Naive thymus-derived CD4-positive, alpha-beta T cell (primary cell): ENCODE measurements at regions of chr1 and their contacts with region 1.

Region 1: GRCh38 chr1:28581536-28582247 is 10.4 kb upstream of the RAB42 start:
- DNase-seq: peak; percentile 85 to 96 (median 91)
- ATAC-seq: peak; percentile 95
- H3K4me3 ChIP-seq: peak overlapping the region; percentile 93
- H3K4me3 Mint-ChIP-seq: peak overlapping the region; percentile 94 to 99 (median 97)
- H3K27ac ChIP-seq: peak overlapping the region; percentile 84
- H3K27ac Mint-ChIP-seq: peak overlapping the region; percentile 86 to 96 (median 93)
- H3K4me1 ChIP-seq: peaks cover 20 to 23% of the 10 kb centered on the region in 2 donors
- H3K4me1 Mint-ChIP-seq: peaks cover 22 to 48% (median 37%) of the 10 kb centered on the region in 7 donors
- H3K27me3 ChIP-seq: no peaks in the 10 kb centered on the region
- H3K27me3 Mint-ChIP-seq: no peaks in the 10 kb centered on the region

Region 2: DNA sequence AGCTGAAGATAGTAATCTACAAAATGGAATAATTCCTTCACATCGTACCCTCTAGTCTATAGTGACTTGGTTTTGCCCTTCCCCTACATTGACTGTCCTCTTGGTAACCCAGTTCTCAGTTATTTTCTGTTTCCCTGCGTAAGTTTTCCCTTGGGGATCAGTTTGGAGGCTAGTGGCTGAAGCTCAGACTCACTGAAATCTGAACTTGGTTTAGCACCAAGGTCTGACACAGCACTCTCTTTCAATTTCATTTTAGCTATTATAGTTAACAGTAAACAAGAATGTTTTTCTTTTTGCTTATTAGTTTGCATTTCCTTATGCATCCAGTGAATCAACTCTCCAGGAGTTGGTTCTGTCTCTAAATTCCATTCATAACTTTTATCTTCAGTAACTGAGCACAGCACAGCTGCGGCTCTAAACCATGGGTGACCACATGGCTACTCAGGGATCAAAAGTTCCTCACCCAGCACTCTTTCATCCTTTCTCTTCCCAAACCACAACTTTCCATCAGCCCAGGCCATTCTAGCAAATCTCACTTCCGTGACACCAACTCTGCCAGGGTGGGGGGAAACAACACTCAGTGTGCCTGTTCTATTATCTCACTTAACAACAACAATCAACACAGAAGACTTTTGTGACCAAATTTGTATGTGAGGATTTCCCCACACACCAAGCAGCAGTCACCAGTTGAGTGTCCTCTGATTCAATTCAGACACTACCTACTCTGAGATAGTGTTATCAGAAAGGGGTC is 892.1 kb before region 1 on chr1:
- CTCF ChIA-PET with region 1: no interaction called
- POLR2A ChIA-PET with region 1: no interaction called
- intact Hi-C with region 1: no loop called
- DNase-seq: no peak
- ATAC-seq: no peak
- H3K4me3 ChIP-seq: no peak overlapping the region
- H3K4me3 Mint-ChIP-seq: peak overlapping the region in 1 of 10 donors; percentile 7
- H3K27ac ChIP-seq: no peak overlapping the region
- H3K27ac Mint-ChIP-seq: peak overlapping the region in 2 of 9 donors; percentile 34 to 79
- H3K4me1 ChIP-seq: no peaks in the 10 kb centered on the region
- H3K4me1 Mint-ChIP-seq: peaks cover 0 to 11% (median 0%) of the 10 kb centered on the region in 7 donors
- H3K27me3 ChIP-seq: no peaks in the 10 kb centered on the region
- H3K27me3 Mint-ChIP-seq: peaks cover 0 to 21% (median 0%) of the 10 kb centered on the region in 5 donors

Region 3: DNA sequence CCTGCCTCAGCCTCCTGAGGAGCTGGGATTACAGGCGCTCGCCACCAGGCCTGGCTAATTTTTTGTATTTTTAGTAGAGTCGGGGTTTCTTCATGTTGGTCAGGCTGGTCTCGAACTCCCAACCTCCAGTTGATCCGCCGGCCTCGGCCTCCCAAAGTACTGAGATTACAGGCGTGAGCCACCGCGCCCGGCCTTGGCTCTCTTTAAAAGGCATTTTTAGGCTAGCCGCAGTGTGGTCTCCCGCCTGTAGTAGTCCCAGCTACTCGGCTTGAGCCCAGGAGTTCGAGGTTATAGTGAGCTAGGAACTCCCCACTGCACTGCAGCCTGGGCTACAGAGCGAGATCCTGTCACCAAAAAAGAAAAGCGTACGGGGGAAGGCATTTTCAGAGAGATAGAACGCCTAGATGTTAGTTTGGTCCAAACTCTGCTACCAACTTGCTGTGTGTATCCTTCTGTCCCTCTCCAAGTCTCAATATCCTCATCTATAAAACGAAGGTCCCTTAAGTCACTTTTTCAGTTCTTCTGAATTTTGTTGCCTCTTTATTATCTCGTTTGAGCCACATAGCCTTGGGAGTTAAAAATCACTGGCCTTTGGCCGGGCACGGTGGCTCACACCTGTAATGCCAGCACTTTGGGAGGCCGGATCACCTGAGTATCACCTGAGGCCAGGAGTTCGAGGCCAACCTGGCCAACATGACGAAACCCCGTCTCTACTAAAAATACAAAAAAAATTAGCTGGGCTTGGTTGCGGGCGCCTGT is 252.1 kb before region 1 on chr1:
- CTCF ChIA-PET with region 1: no interaction called
- POLR2A ChIA-PET with region 1: interaction called, 8 read pairs
- intact Hi-C with region 1: loop called (anchors 1 to 2 kb)
- DNase-seq: peak in 2 of 9 donors; percentile 32 to 48
- ATAC-seq: peak; percentile 14
- H3K4me3 ChIP-seq: peak overlapping the region; percentile 59
- H3K4me3 Mint-ChIP-seq: peak overlapping the region; percentile 89 to 98 (median 92)
- H3K27ac ChIP-seq: peak overlapping the region; percentile 86
- H3K27ac Mint-ChIP-seq: peak overlapping the region; percentile 92 to 100 (median 98)
- H3K4me1 ChIP-seq: peaks cover 13 to 14% of the 10 kb centered on the region in 2 donors
- H3K4me1 Mint-ChIP-seq: peaks cover 20 to 40% (median 39%) of the 10 kb centered on the region in 7 donors
- H3K27me3 ChIP-seq: no peaks in the 10 kb centered on the region
- H3K27me3 Mint-ChIP-seq: peaks cover 0 to 3% (median 0%) of the 10 kb centered on the region in 5 donors

Region 4: DNA sequence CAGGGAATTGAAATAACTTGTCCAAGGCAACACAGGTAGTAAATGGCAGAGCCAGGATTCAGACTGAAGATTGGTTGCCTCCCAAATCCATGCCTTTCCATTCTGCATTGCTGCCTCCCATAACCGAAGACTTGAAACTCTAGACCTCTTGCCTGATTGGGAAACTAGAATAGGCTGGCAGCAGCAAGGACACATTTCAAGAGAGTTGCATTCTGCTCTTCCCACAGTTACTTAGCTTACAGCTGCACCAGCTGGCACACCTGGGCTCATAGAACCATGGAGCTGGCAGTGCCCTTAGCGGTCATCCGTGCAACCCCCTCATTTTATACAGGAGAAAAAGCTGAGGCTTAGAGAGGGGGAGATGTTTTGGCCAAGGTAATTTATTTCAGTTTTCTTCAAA is 20.8 kb before region 1 on chr1:
- CTCF ChIA-PET with region 1: interaction called, 3 read pairs
- POLR2A ChIA-PET with region 1: interaction called, 34 read pairs
- intact Hi-C with region 1: no loop called
- DNase-seq: no peak
- ATAC-seq: no peak
- H3K4me3 ChIP-seq: no peak overlapping the region
- H3K4me3 Mint-ChIP-seq: no peak overlapping the region
- H3K27ac ChIP-seq: no peak overlapping the region
- H3K27ac Mint-ChIP-seq: no peak overlapping the region
- H3K4me1 ChIP-seq: no peaks in the 10 kb centered on the region
- H3K4me1 Mint-ChIP-seq: peaks cover 0 to 2% (median 0%) of the 10 kb centered on the region in 7 donors
- H3K27me3 ChIP-seq: no peaks in the 10 kb centered on the region
- H3K27me3 Mint-ChIP-seq: no peaks in the 10 kb centered on the region

Region 5: GRCh38 chr1:28642847-28643635 is 61.3 kb after region 1 on chr1 and contains the start of gene TAF12:
- CTCF ChIA-PET with region 1: interaction called, 4 read pairs
- POLR2A ChIA-PET with region 1: interaction called, 54 read pairs
- intact Hi-C with region 1: loop called (anchors 1 kb)
- DNase-seq: peak; percentile 81 to 92 (median 86)
- ATAC-seq: peak; percentile 91
- H3K4me3 ChIP-seq: peak within 1 kb of the TSS; percentile 93
- H3K4me3 Mint-ChIP-seq: peak within 1 kb of the TSS; percentile 94 to 100 (median 98)
- H3K27ac ChIP-seq: peak within 1 kb of the TSS; percentile 95
- H3K27ac Mint-ChIP-seq: peak within 1 kb of the TSS; percentile 93 to 99 (median 99)
- H3K4me1 ChIP-seq: peaks cover 26 to 35% of the 10 kb centered on the region in 2 donors
- H3K4me1 Mint-ChIP-seq: peaks cover 30 to 65% (median 55%) of the 10 kb centered on the region in 7 donors
- H3K27me3 ChIP-seq: no peaks in the 10 kb centered on the region
- H3K27me3 Mint-ChIP-seq: peaks cover 0 to 2% (median 0%) of the 10 kb centered on the region in 5 donors
- total RNA-seq, gene TAF12: 13.0 to 34.6 (median 19.3) TPM

Region 6: GRCh38 chr1:28775121-28775944 is 193.6 kb after region 1 on chr1:
- CTCF ChIA-PET with region 1: interaction called, 3 read pairs
- POLR2A ChIA-PET with region 1: no interaction called
- intact Hi-C with region 1: loop called in 1 of 2 experiments (anchors 1 kb)
- DNase-seq: peak; percentile 52 to 77 (median 68)
- ATAC-seq: peak; percentile 91
- H3K4me3 ChIP-seq: peak overlapping the region; percentile 63
- H3K4me3 Mint-ChIP-seq: peak overlapping the region; percentile 79 to 88 (median 84)
- H3K27ac ChIP-seq: peak overlapping the region; percentile 52
- H3K27ac Mint-ChIP-seq: peak overlapping the region; percentile 23 to 94 (median 87)
- H3K4me1 ChIP-seq: peaks cover 6 to 8% of the 10 kb centered on the region in 2 donors
- H3K4me1 Mint-ChIP-seq: peaks cover 0 to 14% (median 12%) of the 10 kb centered on the region in 7 donors
- H3K27me3 ChIP-seq: no peaks in the 10 kb centered on the region
- H3K27me3 Mint-ChIP-seq: peaks cover 0 to 5% (median 0%) of the 10 kb centered on the region in 5 donors

Region 7: GRCh38 chr1:28860332-28861073 is 278.8 kb after region 1 on chr1:
- CTCF ChIA-PET with region 1: no interaction called
- POLR2A ChIA-PET with region 1: no interaction called
- intact Hi-C with region 1: no loop called
- DNase-seq: no peak
- ATAC-seq: no peak
- H3K4me3 ChIP-seq: no peak overlapping the region
- H3K4me3 Mint-ChIP-seq: no peak overlapping the region
- H3K27ac ChIP-seq: no peak overlapping the region
- H3K27ac Mint-ChIP-seq: no peak overlapping the region
- H3K4me1 ChIP-seq: no peaks in the 10 kb centered on the region
- H3K4me1 Mint-ChIP-seq: no peaks in the 10 kb centered on the region
- H3K27me3 ChIP-seq: no peaks in the 10 kb centered on the region
- H3K27me3 Mint-ChIP-seq: peaks cover 0 to 10% (median 0%) of the 10 kb centered on the region in 5 donors

Region 8: DNA sequence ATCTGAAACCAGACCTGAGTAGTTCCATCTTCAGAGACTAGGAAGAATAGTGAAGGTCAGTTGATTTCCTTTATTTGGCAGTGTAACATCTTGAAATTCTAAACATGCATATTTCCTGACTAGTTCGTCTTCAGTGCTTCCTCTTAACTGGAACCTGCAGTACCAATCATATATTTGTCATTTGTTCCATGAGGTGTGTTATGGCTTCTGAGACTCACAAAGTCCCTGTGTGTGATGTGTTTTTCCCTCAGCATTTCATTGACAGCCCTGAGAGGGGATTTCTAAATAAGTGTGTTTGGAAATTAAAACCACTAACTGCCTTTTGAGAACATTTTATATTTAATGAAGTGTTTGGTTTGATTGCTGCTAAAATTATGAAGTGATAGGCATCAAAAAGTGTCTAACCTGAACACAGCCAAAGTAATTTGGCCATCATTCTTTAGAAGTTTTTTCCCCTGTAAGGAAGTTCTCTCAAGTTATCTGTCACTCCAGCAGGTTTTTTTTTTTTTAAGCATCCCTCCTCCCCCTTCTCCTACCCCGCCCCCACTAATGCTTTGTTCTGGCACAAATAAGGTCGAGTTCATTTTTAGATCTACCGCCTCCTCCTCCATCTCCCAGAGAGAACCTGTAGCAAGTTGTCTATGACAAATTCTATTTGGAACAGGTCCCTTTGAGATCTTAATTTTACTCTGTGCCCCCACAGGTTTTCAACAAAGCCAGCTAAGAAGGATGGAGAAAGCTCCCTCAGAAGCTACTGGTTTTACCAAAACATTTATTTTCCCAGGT is 480.7 kb after region 1 on chr1:
- CTCF ChIA-PET with region 1: no interaction called
- POLR2A ChIA-PET with region 1: no interaction called
- intact Hi-C with region 1: no loop called
- DNase-seq: no peak
- ATAC-seq: no peak
- H3K4me3 ChIP-seq: no peak overlapping the region
- H3K4me3 Mint-ChIP-seq: no peak overlapping the region
- H3K27ac ChIP-seq: no peak overlapping the region
- H3K27ac Mint-ChIP-seq: peak overlapping the region in 8 of 9 donors; percentile 15 to 89 (median 58)
- H3K4me1 ChIP-seq: no peaks in the 10 kb centered on the region
- H3K4me1 Mint-ChIP-seq: peaks cover 1 to 23% (median 18%) of the 10 kb centered on the region in 7 donors
- H3K27me3 ChIP-seq: no peaks in the 10 kb centered on the region
- H3K27me3 Mint-ChIP-seq: no peaks in the 10 kb centered on the region

Region 9: GRCh38 chr1:30522031-30523004 is 1940.6 kb after region 1 on chr1:
- CTCF ChIA-PET with region 1: no interaction called
- POLR2A ChIA-PET with region 1: no interaction called
- intact Hi-C with region 1: no loop called
- DNase-seq: no peak
- ATAC-seq: no peak
- H3K4me3 ChIP-seq: no peak overlapping the region
- H3K4me3 Mint-ChIP-seq: no peak overlapping the region
- H3K27ac ChIP-seq: no peak overlapping the region
- H3K27ac Mint-ChIP-seq: no peak overlapping the region
- H3K4me1 ChIP-seq: no peaks in the 10 kb centered on the region
- H3K4me1 Mint-ChIP-seq: peaks cover 0 to 1% (median 0%) of the 10 kb centered on the region in 7 donors
- H3K27me3 ChIP-seq: peaks cover 0 to 3% of the 10 kb centered on the region in 2 donors
- H3K27me3 Mint-ChIP-seq: peaks cover 2 to 35% (median 24%) of the 10 kb centered on the region in 5 donors